Heart left ventricle (tissue), 16 donors: ENCODE measurements at regions of chr2 and their contacts with region 1.

Region 1: DNA sequence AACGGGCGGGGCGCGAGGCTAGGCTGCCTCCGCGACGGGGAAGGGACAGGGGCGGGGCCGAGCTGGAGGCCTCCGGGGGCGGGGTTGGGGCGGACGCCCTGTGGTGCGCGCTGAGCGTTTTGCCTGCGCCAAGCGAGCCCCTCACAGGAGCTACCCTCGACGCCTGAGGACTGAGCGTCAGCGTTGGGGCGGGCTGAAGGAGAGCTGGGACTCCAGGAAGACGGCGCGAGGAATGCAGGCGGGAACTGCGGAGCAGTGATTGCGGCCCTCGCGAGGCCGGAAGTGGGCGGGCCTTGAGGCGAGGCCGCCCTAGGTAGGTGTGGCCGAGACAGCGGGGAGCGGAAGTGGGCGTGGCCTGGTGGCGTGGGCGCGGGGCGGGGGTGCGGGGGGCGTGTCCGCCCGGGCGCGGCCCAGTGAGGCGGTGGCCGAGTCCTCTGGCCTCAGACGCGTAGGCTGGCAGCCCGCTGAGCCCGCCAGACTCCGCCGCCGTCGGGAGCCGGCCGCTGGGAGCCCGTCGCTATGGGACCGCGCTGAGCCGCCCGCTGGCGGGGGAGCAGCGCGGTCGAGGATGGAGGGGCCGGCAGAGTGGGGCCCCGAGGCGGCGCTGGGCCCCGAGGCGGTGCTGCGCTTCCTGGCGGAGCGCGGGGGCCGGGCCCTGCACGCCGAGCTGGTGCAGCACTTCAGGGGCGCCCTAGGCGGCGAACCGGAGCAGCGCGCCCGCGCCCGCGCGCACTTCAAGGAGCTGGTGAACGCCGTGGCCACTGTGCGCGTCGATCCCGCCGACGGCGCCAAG is at the starts of genes SEPTIN10 and SOWAHC:
- DNase-seq: peak; percentile 96 to 98 (median 97)
- ATAC-seq: peak; percentile 96 to 98 (median 97)
- H3K4me3 ChIP-seq: peak within 1 kb of the TSS; percentile 57 to 91 (median 74)
- H3K27ac ChIP-seq: peak within 1 kb of the TSS; percentile 89 to 100 (median 99)
- H3K4me1 ChIP-seq: peaks cover 0 to 55% (median 30%) of the 10 kb centered on the region in 12 donors
- H3K27me3 ChIP-seq: peaks cover 0 to 16% (median 0%) of the 10 kb centered on the region in 9 donors
- CTCF ChIP-seq: no peak
- POLR2A ChIP-seq: peak in 1 of 2 donors; percentile 95
- total RNA-seq, gene SEPTIN10: 35.4 to 84.6 (median 50.0) TPM
- total RNA-seq, gene SOWAHC: 1.3 to 4.2 (median 2.3) TPM

Region 2: GRCh38 chr2:109545828-109546713 is 68.0 kb before region 1 on chr2:
- intact Hi-C with region 1: loop called in 5 of 10 experiments (anchors 5 to 10 kb)
- DNase-seq: peak in 4 of 5 donors; percentile 38 to 67 (median 50)
- ATAC-seq: peak; percentile 64 to 90 (median 87)
- H3K4me3 ChIP-seq: no peak overlapping the region
- H3K27ac ChIP-seq: no peak overlapping the region
- H3K4me1 ChIP-seq: peaks cover 0 to 3% (median 0%) of the 10 kb centered on the region in 12 donors
- H3K27me3 ChIP-seq: no peaks in the 10 kb centered on the region
- CTCF ChIP-seq: peak; percentile 84 to 97 (median 92)
- POLR2A ChIP-seq: no peak

Region 3: DNA sequence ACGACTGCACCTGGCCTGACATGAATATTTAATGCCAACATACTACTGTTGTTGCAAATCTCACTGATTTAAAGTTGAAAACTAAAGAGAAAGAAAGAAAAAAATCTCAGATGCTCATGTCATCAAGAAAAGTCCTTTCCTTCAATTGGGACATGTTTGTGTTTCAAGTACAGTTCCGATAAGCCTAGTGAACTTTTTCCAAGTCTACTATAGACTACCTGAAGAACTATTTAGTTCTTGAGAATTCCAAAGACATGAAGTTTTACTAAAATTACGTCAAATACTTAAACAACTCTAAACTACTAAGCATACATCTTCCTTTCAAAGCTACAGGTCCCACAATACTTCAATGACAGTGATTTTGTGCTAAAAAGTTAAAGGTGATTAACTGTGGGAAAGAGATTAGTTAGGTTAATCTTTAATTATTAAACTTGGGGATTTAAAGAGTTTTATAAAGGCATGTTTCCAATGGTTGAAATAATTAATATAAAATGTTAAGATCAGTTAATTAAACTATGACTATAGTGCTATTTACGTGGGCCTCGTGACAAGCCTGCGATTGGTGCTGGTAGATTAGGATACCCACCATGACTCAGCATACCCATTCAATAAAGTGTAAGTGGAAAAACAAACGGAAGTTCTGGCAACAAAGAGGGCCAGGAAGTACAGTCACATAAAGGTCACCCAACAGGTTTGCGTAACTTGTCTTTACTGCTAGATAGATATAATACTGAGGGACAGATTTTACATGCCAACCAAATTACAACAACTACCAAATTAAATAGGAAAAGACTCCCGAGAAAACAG is 55.8 kb before region 1 on chr2:
- intact Hi-C with region 1: loop called in 4 of 10 experiments (anchors 5 to 10 kb)
- DNase-seq: no peak
- ATAC-seq: peak in 3 of 4 donors; percentile 65 to 84 (median 80)
- H3K4me3 ChIP-seq: no peak overlapping the region
- H3K27ac ChIP-seq: peak overlapping the region in 2 of 12 donors; percentile 16 to 28
- H3K4me1 ChIP-seq: peaks cover 0 to 7% (median 0%) of the 10 kb centered on the region in 12 donors
- H3K27me3 ChIP-seq: no peaks in the 10 kb centered on the region
- CTCF ChIP-seq: no peak
- POLR2A ChIP-seq: no peak

Region 4: DNA sequence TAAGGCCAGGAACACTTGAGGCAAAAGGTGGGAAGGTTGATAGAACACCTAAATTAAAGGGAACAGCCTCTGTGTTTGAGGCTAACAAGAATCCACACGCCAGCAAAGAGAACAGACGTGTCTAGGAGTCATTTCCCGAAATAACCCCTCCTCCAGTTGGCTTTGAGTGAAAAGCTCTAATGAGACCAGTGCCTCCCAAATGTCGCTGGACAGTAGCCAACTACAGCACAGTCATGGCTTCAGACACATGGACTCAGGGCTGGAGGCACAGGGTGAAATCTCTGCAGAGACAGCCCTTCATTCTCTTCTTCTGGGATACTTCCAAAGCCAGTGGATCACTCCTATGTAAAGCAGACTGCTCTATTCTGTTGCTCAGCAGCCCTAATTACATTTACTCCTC is 49.6 kb after region 1 on chr2:
- intact Hi-C with region 1: loop called in 1 of 10 experiments (anchors 10 kb)
- DNase-seq: peak in 4 of 5 donors; percentile 64 to 89 (median 76)
- ATAC-seq: peak; percentile 57 to 97 (median 89)
- H3K4me3 ChIP-seq: no peak overlapping the region
- H3K27ac ChIP-seq: peak overlapping the region in 1 of 12 donors; percentile 8
- H3K4me1 ChIP-seq: peaks cover 0 to 12% (median 7%) of the 10 kb centered on the region in 12 donors
- H3K27me3 ChIP-seq: no peaks in the 10 kb centered on the region
- CTCF ChIP-seq: no peak
- POLR2A ChIP-seq: no peak

Region 5: DNA sequence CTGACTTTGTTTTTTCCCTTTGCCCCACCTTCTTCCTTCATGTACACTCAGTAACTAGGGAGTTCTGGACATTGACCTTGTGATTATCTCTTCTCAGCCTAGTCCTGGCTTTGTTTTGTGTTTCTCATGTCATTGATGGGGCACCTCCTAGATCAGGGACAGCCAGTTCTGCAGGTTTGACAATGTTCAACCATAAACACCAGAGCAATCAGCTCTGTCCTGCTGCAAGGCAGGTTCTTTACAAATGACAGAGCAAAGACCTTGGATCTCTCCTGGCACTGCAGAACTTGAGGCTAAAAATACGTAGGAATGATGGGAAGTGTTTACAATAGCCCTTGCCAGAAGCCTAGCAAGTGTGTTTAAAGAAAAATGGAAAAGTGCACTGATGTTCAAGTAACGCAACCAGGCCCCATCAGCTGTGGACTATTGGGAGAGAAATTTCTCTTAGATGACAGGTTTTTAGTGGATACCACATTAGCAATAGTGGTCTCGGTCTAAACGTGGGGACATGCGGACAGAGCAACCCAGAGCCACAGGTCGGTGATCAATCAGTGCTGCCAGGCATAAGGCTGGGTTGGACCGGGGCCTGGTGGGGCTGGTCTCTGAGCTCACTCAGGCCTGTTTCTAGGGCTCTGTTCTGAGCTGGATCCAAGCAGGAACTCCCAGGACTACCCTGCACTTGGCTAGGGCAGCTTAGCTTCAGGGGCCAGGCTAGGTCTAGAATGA is 76.9 kb after region 1 on chr2:
- intact Hi-C with region 1: loop called in 5 of 10 experiments (anchors 2 to 10 kb)
- DNase-seq: peak in 4 of 5 donors; percentile 26 to 76 (median 52)
- ATAC-seq: peak; percentile 86 to 91 (median 90)
- H3K4me3 ChIP-seq: no peak overlapping the region
- H3K27ac ChIP-seq: peak overlapping the region; percentile 75 to 92 (median 84)
- H3K4me1 ChIP-seq: peaks cover 0 to 31% (median 16%) of the 10 kb centered on the region in 12 donors
- H3K27me3 ChIP-seq: no peaks in the 10 kb centered on the region
- CTCF ChIP-seq: no peak
- POLR2A ChIP-seq: peak in 1 of 2 donors; percentile 26

Region 6: GRCh38 chr2:109702618-109702985 is 88.5 kb after region 1 on chr2:
- intact Hi-C with region 1: loop called in 4 of 10 experiments (anchors 5 to 10 kb)
- DNase-seq: no peak
- ATAC-seq: no peak
- H3K4me3 ChIP-seq: no peak overlapping the region
- H3K27ac ChIP-seq: no peak overlapping the region
- H3K4me1 ChIP-seq: peaks cover 0 to 25% (median 18%) of the 10 kb centered on the region in 12 donors
- H3K27me3 ChIP-seq: no peaks in the 10 kb centered on the region
- CTCF ChIP-seq: no peak
- POLR2A ChIP-seq: no peak